ENCODE measurements at regions of chr9 and their contacts with region 1.

Region 1: DNA sequence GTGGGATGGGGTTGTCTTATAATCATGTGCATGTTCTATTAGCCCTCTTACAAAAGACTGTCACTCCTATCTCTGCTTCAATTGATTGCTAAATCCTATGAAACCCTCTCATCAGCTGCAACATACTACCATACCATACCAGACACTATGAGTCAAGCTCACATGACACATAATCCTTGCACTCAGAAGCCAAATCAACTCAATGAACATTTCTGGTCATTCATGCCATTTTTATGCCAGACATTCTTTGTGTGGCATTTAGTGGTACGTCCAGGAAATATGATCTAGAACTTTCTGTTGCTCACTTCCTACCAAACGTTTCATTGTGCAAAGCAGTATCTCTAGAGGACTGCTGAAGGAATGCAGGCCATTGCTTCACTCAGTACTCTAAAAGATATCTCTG is 159.2 kb upstream of the GNA14 start:
- DNase-seq: peak; percentile 28 to 37
- ATAC-seq: peak; percentile 93 to 96
- H3K4me3 ChIP-seq: no peak overlapping the region
- H3K27ac ChIP-seq: peak overlapping the region; percentile 62 to 76 (median 68)
- H3K4me1 ChIP-seq: peaks cover 17 to 30% of the 10 kb centered on the region in 2 donors
- H3K27me3 ChIP-seq: no peaks in the 10 kb centered on the region
- CTCF ChIP-seq: peak in 2 of 5 experiments; percentile 11 to 18
- POLR2A ChIP-seq: no peak

Region 2: DNA sequence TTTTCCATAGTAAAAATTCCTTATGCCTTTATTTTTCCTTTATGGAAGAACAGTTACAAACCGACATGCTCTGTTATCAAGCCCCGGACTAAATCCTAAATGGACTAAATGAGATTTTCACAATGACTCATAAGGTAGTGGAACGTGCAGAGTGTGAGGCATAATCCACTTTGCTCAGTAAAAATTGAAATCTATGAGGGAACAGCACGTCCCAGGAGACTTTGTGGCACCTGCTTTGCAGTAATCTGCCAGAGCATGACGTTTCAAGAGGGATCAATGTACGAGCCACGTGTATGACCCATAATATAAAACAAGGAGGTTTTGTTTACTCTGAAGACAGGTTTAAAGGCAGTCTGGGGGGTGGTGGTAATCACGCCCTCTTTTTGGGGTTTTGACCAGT is 75.4 kb before region 1 on chr9:
- in situ Hi-C with region 1: no loop called
- intact Hi-C with region 1: loop called (anchors 5 kb)
- DNase-seq: peak; percentile 29 to 37
- ATAC-seq: peak; percentile 75 to 94
- H3K4me3 ChIP-seq: no peak overlapping the region
- H3K27ac ChIP-seq: peak overlapping the region; percentile 33 to 75 (median 43)
- H3K4me1 ChIP-seq: peaks cover 28 to 32% of the 10 kb centered on the region in 2 donors
- H3K27me3 ChIP-seq: no peaks in the 10 kb centered on the region
- CTCF ChIP-seq: no peak
- POLR2A ChIP-seq: peak in 1 of 2 donors; percentile 32

Region 3: DNA sequence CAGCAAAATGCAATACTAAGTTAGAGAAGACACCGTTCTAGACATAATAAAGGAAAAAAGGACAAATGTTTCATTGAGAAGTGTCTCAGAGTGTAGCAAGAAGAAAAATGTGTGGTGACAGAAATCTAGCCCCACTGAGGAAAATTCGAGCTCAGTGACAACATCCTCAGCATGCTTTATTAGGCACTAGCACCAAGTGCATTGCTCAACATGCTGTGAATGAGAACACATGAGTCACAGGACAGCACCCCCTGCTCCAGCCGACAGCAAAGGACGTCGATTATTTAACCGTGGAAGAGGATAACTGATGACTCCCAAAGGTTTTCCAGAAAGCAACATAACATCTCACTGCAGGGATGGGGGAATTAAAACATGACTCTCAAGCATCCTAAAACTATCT is 41.6 kb after region 1 on chr9:
- in situ Hi-C with region 1: no loop called
- intact Hi-C with region 1: loop called (anchors 2 kb)
- DNase-seq: peak; percentile 79
- ATAC-seq: peak; percentile 96 to 97
- H3K4me3 ChIP-seq: no peak overlapping the region
- H3K27ac ChIP-seq: peak overlapping the region; percentile 52 to 76 (median 72)
- H3K4me1 ChIP-seq: peaks cover 15 to 23% of the 10 kb centered on the region in 2 donors
- H3K27me3 ChIP-seq: no peaks in the 10 kb centered on the region
- CTCF ChIP-seq: no peak
- POLR2A ChIP-seq: no peak